Kidney (tissue), 22 donors: ENCODE measurements at regions of chr19 and their contacts with region 1.

Region 1: DNA sequence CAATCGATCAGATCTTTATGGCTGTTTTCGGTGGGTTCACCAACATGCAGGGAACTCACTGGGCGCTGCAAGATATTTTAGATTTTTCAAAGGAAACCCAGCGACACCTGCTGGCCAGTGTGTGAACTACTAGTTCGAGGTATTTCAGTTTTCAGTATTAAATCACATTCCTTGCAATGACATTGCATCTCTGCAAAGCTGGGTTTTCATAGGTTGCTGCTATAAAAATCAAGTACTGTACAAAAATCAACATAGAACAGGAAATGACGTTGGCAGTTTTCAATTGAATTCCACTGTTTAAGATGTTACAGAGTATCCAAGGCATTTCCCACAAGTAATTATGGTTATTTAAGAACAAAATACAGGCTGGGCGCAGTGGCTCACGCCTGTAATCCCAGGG is 17.6 kb downstream of the LIG1 start:
- DNase-seq: peak in 4 of 5 donors; percentile 64 to 77 (median 72)
- H3K4me3 ChIP-seq: no peak overlapping the region
- H3K27ac ChIP-seq: no peak overlapping the region
- H3K4me1 ChIP-seq: no peaks in the 10 kb centered on the region
- H3K27me3 ChIP-seq: no peaks in the 10 kb centered on the region
- CTCF ChIP-seq: peak; percentile 89

Region 2: GRCh38 chr19:48102870-48103751 is 49.4 kb before region 1 on chr19:
- intact Hi-C with region 1: loop called (anchors 10 kb)
- DNase-seq: peak in 4 of 5 donors; percentile 17 to 54 (median 28)
- H3K4me3 ChIP-seq: no peak overlapping the region
- H3K27ac ChIP-seq: no peak overlapping the region
- H3K4me1 ChIP-seq: no peaks in the 10 kb centered on the region
- H3K27me3 ChIP-seq: no peaks in the 10 kb centered on the region
- CTCF ChIP-seq: peak; percentile 56